Heart right ventricle (tissue), 16 donors: ENCODE measurements at regions of chr1 and their contacts with region 1.

Region 1: GRCh38 chr1:12434174-12434573 is 183.8 kb downstream of the DHRS3 start:
- DNase-seq: no peak
- ATAC-seq: peak; percentile 10 to 63 (median 42)
- H3K4me3 ChIP-seq: no peak overlapping the region
- H3K27ac ChIP-seq: peak overlapping the region; percentile 1 to 88 (median 78)
- H3K4me1 ChIP-seq: peaks cover 12 to 92% (median 62%) of the 10 kb centered on the region in 9 donors
- H3K27me3 ChIP-seq: no peaks in the 10 kb centered on the region
- CTCF ChIP-seq: no peak

Region 2: GRCh38 chr1:12369258-12369657 is 64.9 kb before region 1 on chr1:
- intact Hi-C with region 1: no loop called
- DNase-seq: no peak
- ATAC-seq: no peak
- H3K4me3 ChIP-seq: no peak overlapping the region
- H3K27ac ChIP-seq: no peak overlapping the region
- H3K4me1 ChIP-seq: peaks cover 0 to 5% (median 0%) of the 10 kb centered on the region in 9 donors
- H3K27me3 ChIP-seq: no peaks in the 10 kb centered on the region
- CTCF ChIP-seq: no peak

Region 3: DNA sequence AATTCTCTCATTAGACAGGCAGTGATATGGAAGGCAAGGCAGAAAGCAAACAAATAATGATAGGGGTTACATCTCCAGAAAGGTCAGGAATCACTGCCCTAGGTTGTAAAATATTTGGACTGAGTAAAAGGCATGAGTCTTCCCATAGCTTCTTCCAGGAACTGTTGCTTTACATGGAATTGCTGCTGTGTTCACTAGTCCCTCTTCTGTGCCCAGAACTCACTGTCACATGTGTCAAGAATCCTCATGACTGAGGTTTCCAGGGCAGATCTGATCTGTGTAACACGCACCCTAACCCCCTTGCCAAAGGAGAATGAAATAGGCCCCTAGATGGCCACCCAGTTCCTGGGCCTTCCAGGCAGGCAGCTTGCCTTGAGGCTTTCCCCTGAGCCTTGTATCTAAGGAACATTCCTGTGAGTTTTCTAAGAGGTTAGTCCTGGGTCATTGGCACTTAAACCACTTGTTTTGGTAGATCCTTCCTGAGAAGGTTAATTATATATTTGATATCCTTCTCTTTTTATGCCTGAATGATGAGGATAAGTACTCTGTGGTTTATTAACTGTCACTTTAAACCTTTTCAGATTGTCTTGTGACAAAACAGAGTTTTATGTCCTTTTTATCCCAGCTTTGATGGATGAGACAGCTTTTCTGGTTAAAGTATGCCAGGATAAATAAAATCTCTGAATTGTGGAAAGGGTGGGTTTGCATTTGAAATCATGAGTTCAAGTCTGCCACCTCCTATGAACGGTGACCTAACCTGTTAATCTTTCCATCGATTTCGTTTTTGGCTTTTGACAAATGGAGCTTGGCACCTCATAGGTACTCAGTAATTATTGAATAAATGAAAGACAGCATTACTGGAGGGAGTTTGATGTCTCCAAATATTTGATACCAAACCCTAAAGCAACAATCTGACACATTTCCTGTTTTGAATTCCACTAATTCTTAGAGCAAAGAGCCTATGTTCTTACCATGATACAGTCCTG is 20.5 kb after region 1 on chr1:
- intact Hi-C with region 1: loop called in 1 of 10 experiments (anchors 2 kb)
- DNase-seq: no peak
- ATAC-seq: peak; percentile 8 to 41 (median 28)
- H3K4me3 ChIP-seq: no peak overlapping the region
- H3K27ac ChIP-seq: peak overlapping the region; percentile 31 to 91 (median 74)
- H3K4me1 ChIP-seq: peaks cover 35 to 98% (median 90%) of the 10 kb centered on the region in 9 donors
- H3K27me3 ChIP-seq: no peaks in the 10 kb centered on the region
- CTCF ChIP-seq: no peak

Region 4: DNA sequence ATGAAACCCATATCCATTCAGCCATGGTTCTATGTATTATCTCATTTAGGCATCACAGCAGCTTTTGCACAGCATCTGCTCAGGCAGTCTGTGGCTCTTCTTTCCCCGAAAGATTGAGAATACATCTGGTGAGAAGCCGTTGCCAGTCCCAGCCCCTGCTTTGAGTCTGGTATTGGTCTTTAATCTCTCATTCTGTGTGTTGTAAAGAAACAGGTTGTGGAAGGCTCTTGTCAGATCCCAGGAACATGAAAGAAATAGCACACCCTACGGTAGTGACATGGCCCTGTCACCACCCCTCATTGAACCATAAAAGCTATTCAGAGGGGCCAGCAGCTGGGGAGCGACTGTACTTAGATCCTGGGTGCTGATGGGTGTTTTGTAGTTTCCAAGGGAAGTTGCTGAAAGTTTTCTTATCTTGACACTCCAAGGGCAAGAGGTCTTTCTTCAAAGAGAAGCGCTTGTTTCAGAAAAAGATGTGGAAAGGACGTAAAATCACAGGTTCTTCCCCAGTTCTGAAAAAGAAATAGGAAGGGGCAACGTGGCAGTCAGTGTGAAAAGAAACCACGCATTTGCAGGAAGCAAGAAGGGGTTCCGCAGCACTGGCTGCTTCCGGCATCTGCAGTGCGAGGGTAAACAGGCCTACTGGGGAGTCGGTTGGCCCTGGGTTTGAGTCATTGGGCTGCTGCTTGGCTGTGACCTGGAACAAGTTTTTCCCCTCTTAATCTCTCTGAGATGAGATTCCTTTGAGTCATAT is 38.8 kb after region 1 on chr1:
- intact Hi-C with region 1: loop called in 1 of 10 experiments (anchors 5 kb)
- DNase-seq: peak in 1 of 2 donors; percentile 29
- ATAC-seq: peak in 3 of 8 donors; percentile 9 to 34 (median 25)
- H3K4me3 ChIP-seq: no peak overlapping the region
- H3K27ac ChIP-seq: peak overlapping the region; percentile 6 to 91 (median 74)
- H3K4me1 ChIP-seq: peaks cover 22 to 90% (median 79%) of the 10 kb centered on the region in 9 donors
- H3K27me3 ChIP-seq: no peaks in the 10 kb centered on the region
- CTCF ChIP-seq: no peak

Region 5: DNA sequence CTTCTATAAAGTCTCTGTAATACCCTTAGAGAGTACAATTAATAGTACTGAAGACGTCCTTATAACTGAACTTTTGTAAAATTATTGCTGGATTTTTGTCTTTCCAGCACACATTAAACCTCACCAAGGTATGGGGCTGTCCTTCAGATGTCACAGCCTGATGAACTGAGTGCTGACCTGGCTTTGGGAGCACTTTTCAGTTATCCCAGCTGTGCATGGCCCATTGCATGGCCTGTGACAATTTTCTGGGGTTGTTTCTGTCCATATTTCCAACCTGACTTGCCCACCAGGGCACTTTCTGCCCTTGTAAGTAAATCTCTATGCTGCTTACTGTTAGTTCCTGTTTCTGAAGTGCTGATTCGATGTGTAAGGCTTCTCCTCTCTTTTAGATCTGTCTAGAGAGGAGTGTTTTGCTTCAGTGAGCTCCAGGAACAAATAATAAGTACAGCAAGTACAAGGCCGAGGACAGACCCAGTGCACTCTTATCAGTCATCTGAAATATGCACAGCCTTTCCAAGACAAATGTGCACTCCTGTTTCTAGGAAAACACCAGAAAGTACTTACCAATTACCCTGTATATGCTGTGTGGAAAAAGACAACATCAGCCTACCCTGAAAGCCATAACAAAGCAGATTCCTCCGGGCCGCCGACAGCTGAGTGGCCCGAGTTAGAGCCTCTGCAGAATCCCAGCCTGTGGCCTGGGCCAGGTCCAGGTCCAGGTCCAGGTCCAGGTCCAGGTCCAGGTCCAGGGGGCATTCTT is 62.2 kb after region 1 on chr1:
- intact Hi-C with region 1: loop called in 1 of 10 experiments (anchors 10 kb)
- DNase-seq: no peak
- ATAC-seq: peak; percentile 44 to 88 (median 76)
- H3K4me3 ChIP-seq: no peak overlapping the region
- H3K27ac ChIP-seq: peak overlapping the region in 9 of 10 donors; percentile 46 to 83 (median 68)
- H3K4me1 ChIP-seq: peaks cover 8 to 31% (median 26%) of the 10 kb centered on the region in 9 donors
- H3K27me3 ChIP-seq: no peaks in the 10 kb centered on the region
- CTCF ChIP-seq: no peak

Region 6: GRCh38 chr1:12604114-12604874 is 170.1 kb after region 1 on chr1:
- intact Hi-C with region 1: loop called in 1 of 10 experiments (anchors 5 kb)
- DNase-seq: peak; percentile 42 to 74
- ATAC-seq: peak; percentile 78 to 93 (median 86)
- H3K4me3 ChIP-seq: peak overlapping the region in 1 of 10 donors; percentile 12
- H3K27ac ChIP-seq: peak overlapping the region; percentile 53 to 95 (median 78)
- H3K4me1 ChIP-seq: peaks cover 49 to 75% (median 68%) of the 10 kb centered on the region in 9 donors
- H3K27me3 ChIP-seq: no peaks in the 10 kb centered on the region
- CTCF ChIP-seq: no peak